Heart left ventricle (tissue), 16 donors: ENCODE measurements at regions of chr21 and their contacts with region 1.

Region 1: GRCh38 chr21:41283211-41283818 is 33.3 kb upstream of the FAM3B start:
- DNase-seq: peak in 2 of 5 donors; percentile 41 to 43
- ATAC-seq: peak; percentile 58 to 92 (median 91)
- H3K4me3 ChIP-seq: no peak overlapping the region
- H3K27ac ChIP-seq: no peak overlapping the region
- H3K4me1 ChIP-seq: peaks cover 0 to 4% (median 0%) of the 10 kb centered on the region in 12 donors
- H3K27me3 ChIP-seq: peaks cover 0 to 7% (median 0%) of the 10 kb centered on the region in 9 donors
- CTCF ChIP-seq: peak; percentile 60 to 87 (median 78)
- POLR2A ChIP-seq: no peak

Region 2: DNA sequence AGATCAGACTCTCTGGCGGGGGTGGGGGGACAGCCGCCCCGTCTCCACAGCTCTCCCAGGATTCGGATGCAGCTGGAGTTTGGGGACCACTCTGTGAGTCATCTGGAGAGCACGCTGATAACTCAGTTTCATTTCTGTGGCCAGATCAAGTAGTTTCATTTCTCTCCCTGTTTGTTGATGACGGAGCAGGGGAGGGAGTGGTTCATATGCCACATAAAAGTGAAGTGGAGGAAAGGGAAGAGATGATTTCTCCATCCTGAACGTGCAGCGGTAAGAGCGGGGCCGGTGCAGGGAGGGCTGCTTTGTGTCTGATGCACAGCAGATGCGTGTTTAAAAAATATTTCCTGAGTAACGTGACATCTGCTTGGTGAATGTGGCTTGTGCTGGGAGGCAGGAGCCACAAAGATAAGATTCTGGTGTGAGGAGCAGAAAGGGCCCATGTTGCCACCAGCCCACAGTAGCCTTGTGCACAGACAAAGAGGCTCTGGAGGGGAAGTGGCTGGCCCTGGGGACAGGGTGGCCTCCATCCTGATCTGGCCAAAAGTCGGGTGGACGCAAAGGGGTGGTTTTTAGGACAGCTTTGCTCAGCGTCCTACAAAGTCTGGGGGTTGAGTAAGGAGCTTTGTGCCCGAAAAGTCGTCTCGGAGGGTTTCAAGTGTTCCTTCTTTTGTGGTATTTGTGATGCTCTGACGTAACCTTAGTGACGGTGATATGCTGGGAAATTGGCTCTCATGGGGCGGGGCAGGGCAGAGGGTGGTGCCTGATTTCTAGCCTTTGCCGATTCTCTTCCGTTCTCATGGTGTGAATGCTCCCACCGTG is 78.7 kb after region 1 on chr21 and contains the start of gene MX2:
- intact Hi-C with region 1: loop called in 2 of 10 experiments (anchors 5 kb)
- DNase-seq: peak; percentile 79 to 84 (median 81)
- ATAC-seq: peak; percentile 85 to 94 (median 88)
- H3K4me3 ChIP-seq: peak within 1 kb of the TSS; percentile 16 to 70 (median 55)
- H3K27ac ChIP-seq: peak within 1 kb of the TSS; percentile 80 to 98 (median 94)
- H3K4me1 ChIP-seq: peaks cover 0 to 43% (median 16%) of the 10 kb centered on the region in 12 donors
- H3K27me3 ChIP-seq: peaks cover 0 to 4% (median 0%) of the 10 kb centered on the region in 9 donors
- CTCF ChIP-seq: no peak
- POLR2A ChIP-seq: no peak
- total RNA-seq, gene MX2: 4.2 to 23.3 (median 6.0) TPM

Region 3: GRCh38 chr21:41369105-41369919 is 86.0 kb after region 1 on chr21:
- intact Hi-C with region 1: loop called in 1 of 10 experiments (anchors 5 kb)
- DNase-seq: peak; percentile 49 to 75 (median 60)
- ATAC-seq: peak in 3 of 4 donors; percentile 40 to 67 (median 47)
- H3K4me3 ChIP-seq: peak overlapping the region; percentile 12 to 57 (median 46)
- H3K27ac ChIP-seq: peak overlapping the region in 11 of 12 donors; percentile 31 to 84 (median 67)
- H3K4me1 ChIP-seq: peaks cover 0 to 67% (median 20%) of the 10 kb centered on the region in 12 donors
- H3K27me3 ChIP-seq: peaks cover 0 to 10% (median 0%) of the 10 kb centered on the region in 9 donors
- CTCF ChIP-seq: no peak
- POLR2A ChIP-seq: no peak

Region 4: GRCh38 chr21:41460578-41461527 is 177.5 kb after region 1 on chr21:
- intact Hi-C with region 1: loop called (anchors 1 to 5 kb)
- DNase-seq: peak; percentile 56 to 83 (median 81)
- ATAC-seq: peak in 3 of 4 donors; percentile 90 to 91 (median 90)
- H3K4me3 ChIP-seq: no peak overlapping the region
- H3K27ac ChIP-seq: no peak overlapping the region
- H3K4me1 ChIP-seq: peaks cover 0 to 2% (median 0%) of the 10 kb centered on the region in 12 donors
- H3K27me3 ChIP-seq: peaks cover 0 to 2% (median 0%) of the 10 kb centered on the region in 9 donors
- CTCF ChIP-seq: peak; percentile 64 to 85 (median 78)
- POLR2A ChIP-seq: no peak

Region 5: DNA sequence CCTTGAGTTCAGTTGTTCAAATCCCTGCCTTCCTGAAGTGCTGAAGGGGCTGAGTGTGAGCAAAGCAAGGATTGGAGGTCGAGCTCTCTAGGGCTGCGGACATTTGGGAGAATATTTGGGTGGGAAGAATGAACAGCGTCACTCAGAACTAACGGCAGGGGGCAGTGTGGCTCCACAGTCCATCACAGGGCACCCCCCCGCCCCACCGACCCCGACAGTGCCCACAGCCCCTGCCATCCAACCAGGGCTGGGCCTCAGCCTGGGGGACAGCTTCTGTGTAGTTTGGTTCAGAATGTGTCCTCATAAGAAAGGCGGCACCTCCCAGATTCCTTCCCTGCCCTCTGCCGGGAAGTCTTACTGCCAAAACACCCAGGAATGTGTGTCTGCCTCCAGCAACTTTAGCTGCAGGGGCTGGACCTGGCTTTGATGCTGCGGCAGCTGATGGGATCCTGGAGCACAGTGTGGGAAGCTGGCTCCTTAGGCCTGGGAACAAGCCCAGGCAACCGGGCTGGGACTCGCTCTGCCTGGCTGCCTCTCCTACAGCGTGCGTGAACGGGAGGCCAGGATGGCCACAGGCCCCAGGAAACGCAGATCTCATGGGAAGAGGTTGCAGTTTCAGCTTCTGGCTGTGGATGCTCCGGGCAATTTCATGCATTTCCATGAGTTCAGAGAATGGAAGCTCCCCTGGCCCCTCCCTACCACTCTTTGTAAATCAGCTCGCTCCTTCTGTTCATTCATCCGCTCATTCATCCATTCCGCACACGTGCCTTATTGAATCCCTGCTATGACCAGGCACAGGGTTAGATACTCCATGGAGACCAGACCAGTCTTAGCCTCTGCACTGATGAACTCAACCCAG is 329.6 kb after region 1 on chr21:
- intact Hi-C with region 1: loop called in 1 of 10 experiments (anchors 10 kb)
- DNase-seq: peak; percentile 65 to 80 (median 74)
- ATAC-seq: peak; percentile 80 to 91 (median 88)
- H3K4me3 ChIP-seq: no peak overlapping the region
- H3K27ac ChIP-seq: peak overlapping the region in 4 of 12 donors; percentile 27 to 66 (median 48)
- H3K4me1 ChIP-seq: peaks cover 0 to 26% (median 8%) of the 10 kb centered on the region in 12 donors
- H3K27me3 ChIP-seq: peaks cover 0 to 31% (median 9%) of the 10 kb centered on the region in 9 donors
- CTCF ChIP-seq: peak; percentile 57 to 82 (median 76)
- POLR2A ChIP-seq: no peak

Region 6: DNA sequence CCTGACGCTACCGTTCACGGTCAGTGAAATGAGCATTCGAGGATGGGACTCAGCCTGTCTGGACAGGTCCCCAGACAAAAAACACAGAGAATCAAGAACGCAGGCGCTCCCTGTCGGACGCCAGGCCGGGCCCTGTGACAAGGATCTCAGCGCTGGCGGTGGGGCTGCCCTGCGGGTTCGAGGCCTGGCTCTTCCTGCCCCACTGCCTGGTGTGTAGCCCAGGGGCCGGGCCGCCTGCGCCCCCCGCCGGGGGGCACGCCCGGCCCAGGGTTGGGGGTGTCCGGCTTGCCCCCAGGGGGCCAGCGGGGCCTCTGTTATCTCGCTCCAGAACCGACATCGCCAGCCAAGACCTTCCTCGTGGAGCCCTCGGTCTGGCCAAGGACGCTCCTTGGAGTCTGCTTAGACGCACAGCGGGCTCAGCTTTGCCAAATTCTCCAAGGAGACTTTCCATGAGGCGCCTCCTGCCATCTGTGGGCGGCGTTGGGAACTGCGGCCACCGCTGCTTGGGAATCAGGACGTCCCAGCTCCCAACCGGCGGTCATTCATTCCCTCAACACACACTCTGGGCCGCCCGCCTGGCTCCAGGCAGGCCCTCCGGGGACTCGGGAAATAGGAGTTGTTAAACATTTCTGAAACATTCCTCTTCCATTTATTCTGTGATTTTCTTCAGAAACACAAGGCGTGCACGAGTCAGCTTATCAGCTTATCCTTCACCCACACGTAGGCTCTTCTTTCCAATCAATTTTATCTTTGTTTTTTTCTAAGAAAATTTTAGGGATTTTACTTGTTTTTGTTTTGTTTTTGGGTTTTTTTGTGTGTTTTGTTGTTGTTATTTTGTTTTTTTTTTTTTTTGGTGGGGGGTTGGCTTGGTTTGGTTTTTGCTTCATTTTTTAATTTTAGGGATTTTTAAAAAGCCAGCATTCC is 494.9 kb after region 1 on chr21:
- intact Hi-C with region 1: loop called in 9 of 10 experiments (anchors 2 to 10 kb)
- DNase-seq: peak; percentile 76 to 90 (median 80)
- ATAC-seq: peak; percentile 71 to 97 (median 92)
- H3K4me3 ChIP-seq: no peak overlapping the region
- H3K27ac ChIP-seq: no peak overlapping the region
- H3K4me1 ChIP-seq: peaks cover 0 to 10% (median 7%) of the 10 kb centered on the region in 12 donors
- H3K27me3 ChIP-seq: peaks cover 4 to 69% (median 38%) of the 10 kb centered on the region in 9 donors
- CTCF ChIP-seq: peak; percentile 76 to 97 (median 92)
- POLR2A ChIP-seq: no peak